ENCODE measurements at regions of chr14 and their contacts with region 1.

Region 1: GRCh38 chr14:25988536-25988935 is 609.3 kb downstream of the NOVA1 start:
- DNase-seq: no peak
- H3K4me3 ChIP-seq: no peak overlapping the region
- H3K27ac ChIP-seq: no peak overlapping the region
- H3K4me1 ChIP-seq: no peaks in the 10 kb centered on the region
- H3K27me3 ChIP-seq: no peaks in the 10 kb centered on the region
- CTCF ChIP-seq: no peak
- POLR2A ChIP-seq: no peak

Region 2: DNA sequence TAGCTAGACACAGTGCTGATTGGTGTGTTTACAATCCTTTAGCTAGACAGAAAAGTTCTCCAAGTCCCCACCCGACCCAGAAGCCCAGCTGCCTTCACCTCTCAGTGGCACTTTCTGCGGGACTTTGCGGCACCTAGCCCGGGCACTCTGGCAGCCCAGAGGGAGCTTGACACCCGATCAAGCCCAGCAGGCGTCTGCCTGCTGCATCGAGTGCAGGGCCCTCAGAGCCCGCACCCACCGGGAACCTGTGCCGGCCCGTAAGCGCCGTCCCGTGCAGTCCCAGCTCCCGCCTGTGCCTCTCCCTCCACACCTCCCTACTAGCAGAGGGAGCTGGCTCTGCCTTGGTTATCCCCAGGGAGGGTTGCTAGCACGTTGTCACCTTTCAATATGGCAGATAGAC is 307.6 kb before region 1 on chr14:
- intact Hi-C with region 1: no loop called
- DNase-seq: no peak
- H3K4me3 ChIP-seq: no peak overlapping the region
- H3K27ac ChIP-seq: no peak overlapping the region
- H3K4me1 ChIP-seq: no peaks in the 10 kb centered on the region
- H3K27me3 ChIP-seq: no peaks in the 10 kb centered on the region
- CTCF ChIP-seq: no peak
- POLR2A ChIP-seq: no peak

Region 3: DNA sequence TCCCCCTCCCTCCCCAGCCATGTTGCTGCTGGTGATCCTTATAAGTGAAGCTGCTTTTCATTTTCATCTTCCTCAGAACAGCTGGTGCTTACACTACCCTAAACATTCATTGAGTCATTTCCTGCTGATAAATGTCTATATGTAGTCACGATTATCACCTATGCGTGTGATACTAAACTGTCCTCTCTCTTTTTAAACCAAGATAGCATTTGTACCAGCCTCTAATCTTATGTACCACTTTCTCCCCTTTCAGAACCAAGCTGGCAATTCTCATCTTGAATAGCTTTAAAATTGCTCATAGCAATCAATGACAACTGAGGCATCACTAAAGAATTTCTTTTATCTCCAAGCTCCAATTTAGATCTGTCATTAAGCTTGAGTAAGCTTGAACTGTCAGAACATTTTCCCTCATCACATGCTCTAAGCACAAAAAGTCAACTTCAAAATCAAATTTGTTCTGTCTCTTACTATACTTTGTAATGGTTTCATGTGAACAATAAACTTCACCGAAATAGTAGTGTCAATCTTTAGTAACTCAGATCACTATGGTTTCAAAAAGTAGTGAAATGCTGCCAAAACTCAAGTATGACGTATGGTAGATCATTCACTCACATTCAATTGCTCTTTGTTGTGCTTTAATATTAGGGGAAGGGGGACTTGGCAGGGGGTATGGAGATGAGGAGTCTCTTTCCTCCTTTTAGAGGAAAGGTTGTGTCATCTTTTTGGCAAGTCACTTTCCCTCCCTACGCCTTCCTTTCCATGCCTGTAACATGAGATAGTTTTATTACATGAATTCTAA is 787.4 kb after region 1 on chr14:
- intact Hi-C with region 1: loop called (anchors 10 kb)
- DNase-seq: no peak
- H3K4me3 ChIP-seq: no peak overlapping the region
- H3K27ac ChIP-seq: no peak overlapping the region
- H3K4me1 ChIP-seq: no peaks in the 10 kb centered on the region
- H3K27me3 ChIP-seq: no peaks in the 10 kb centered on the region
- CTCF ChIP-seq: no peak
- POLR2A ChIP-seq: no peak